Activated naive CD4-positive, alpha-beta T cell treated with anti-CD3 and anti-CD28 coated beads for 36 hours (primary cell): ENCODE measurements at regions of chr17 and their contacts with region 1.

Region 1: GRCh38 chr17:49707608-49708514 is at the start of gene SLC35B1:
- DNase-seq: peak; percentile 99
- H3K4me3 Mint-ChIP-seq: peak within 1 kb of the TSS; percentile 84
- H3K27ac Mint-ChIP-seq: peak within 1 kb of the TSS; percentile 98
- H3K4me1 Mint-ChIP-seq: peaks cover 36% of the 10 kb centered on the region
- H3K27me3 Mint-ChIP-seq: no peaks in the 10 kb centered on the region
- total RNA-seq, gene SLC35B1: 35.3 to 39.5 TPM

Region 2: GRCh38 chr17:48593840-48594537 is 1113.9 kb before region 1 on chr17:
- CTCF ChIA-PET with region 1: no interaction called
- intact Hi-C with region 1: no loop called
- DNase-seq: peak; percentile 87
- H3K4me3 Mint-ChIP-seq: peak overlapping the region; percentile 77
- H3K27ac Mint-ChIP-seq: no peak overlapping the region
- H3K4me1 Mint-ChIP-seq: peaks cover 36% of the 10 kb centered on the region
- H3K27me3 Mint-ChIP-seq: peaks cover 90% of the 10 kb centered on the region

Region 3: GRCh38 chr17:49556223-49556971 is 151.5 kb before region 1 on chr17:
- CTCF ChIA-PET with region 1: interaction called, 17 read pairs
- intact Hi-C with region 1: no loop called
- DNase-seq: peak; percentile 87
- H3K4me3 Mint-ChIP-seq: no peak overlapping the region
- H3K27ac Mint-ChIP-seq: no peak overlapping the region
- H3K4me1 Mint-ChIP-seq: peaks cover 5% of the 10 kb centered on the region
- H3K27me3 Mint-ChIP-seq: peaks cover 2% of the 10 kb centered on the region

Region 4: DNA sequence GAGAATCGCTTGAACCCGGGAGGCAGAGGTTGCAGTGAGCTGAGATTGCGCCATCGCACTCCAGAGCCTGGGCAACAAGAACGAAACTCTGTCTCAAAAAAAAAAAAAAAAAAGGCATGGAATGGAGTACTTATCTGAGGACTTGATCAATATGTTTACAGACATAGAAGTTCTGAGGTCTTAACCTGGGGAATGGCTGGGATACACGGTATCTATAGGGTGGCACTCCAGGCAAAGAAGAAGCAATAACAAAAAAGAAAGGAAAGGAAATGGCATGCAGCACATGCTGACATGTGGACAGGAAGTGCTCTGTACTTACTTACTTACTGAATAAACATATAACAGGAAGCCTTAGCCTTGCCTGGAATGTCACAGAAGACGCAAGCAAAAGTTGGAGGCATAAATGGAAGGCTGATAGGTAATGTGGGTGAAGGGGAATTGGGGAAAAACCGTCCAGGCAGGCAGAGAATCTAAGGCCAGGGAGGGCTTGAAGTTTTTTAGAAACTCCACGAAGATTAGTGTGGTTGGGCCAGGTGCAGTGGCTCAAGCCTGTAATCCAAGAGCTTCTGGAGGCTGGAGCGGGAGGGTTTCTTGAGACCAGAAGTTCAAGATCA is 19.9 kb before region 1 on chr17:
- CTCF ChIA-PET with region 1: interaction called, 23 read pairs
- intact Hi-C with region 1: no loop called
- DNase-seq: peak; percentile 53
- H3K4me3 Mint-ChIP-seq: peak overlapping the region; percentile 36
- H3K27ac Mint-ChIP-seq: peak overlapping the region; percentile 90
- H3K4me1 Mint-ChIP-seq: peaks cover 47% of the 10 kb centered on the region
- H3K27me3 Mint-ChIP-seq: no peaks in the 10 kb centered on the region

Region 5: GRCh38 chr17:49739641-49740271 is 31.9 kb after region 1 on chr17:
- CTCF ChIA-PET with region 1: interaction called, 8 read pairs
- intact Hi-C with region 1: loop called (anchors 2 kb)
- DNase-seq: peak; percentile 92
- H3K4me3 Mint-ChIP-seq: peak overlapping the region; percentile 84
- H3K27ac Mint-ChIP-seq: peak overlapping the region; percentile 99
- H3K4me1 Mint-ChIP-seq: peaks cover 73% of the 10 kb centered on the region
- H3K27me3 Mint-ChIP-seq: no peaks in the 10 kb centered on the region

Region 6: GRCh38 chr17:49763735-49764558 is 56.1 kb after region 1 on chr17 and contains the start of gene FAM117A:
- CTCF ChIA-PET with region 1: interaction called, 32 read pairs
- intact Hi-C with region 1: loop called (anchors 1 kb)
- DNase-seq: peak; percentile 99
- H3K4me3 Mint-ChIP-seq: peak within 1 kb of the TSS; percentile 88
- H3K27ac Mint-ChIP-seq: peak within 1 kb of the TSS; percentile 83
- H3K4me1 Mint-ChIP-seq: peaks cover 47% of the 10 kb centered on the region
- H3K27me3 Mint-ChIP-seq: no peaks in the 10 kb centered on the region
- total RNA-seq, gene FAM117A: 17.7 TPM

Region 7: DNA sequence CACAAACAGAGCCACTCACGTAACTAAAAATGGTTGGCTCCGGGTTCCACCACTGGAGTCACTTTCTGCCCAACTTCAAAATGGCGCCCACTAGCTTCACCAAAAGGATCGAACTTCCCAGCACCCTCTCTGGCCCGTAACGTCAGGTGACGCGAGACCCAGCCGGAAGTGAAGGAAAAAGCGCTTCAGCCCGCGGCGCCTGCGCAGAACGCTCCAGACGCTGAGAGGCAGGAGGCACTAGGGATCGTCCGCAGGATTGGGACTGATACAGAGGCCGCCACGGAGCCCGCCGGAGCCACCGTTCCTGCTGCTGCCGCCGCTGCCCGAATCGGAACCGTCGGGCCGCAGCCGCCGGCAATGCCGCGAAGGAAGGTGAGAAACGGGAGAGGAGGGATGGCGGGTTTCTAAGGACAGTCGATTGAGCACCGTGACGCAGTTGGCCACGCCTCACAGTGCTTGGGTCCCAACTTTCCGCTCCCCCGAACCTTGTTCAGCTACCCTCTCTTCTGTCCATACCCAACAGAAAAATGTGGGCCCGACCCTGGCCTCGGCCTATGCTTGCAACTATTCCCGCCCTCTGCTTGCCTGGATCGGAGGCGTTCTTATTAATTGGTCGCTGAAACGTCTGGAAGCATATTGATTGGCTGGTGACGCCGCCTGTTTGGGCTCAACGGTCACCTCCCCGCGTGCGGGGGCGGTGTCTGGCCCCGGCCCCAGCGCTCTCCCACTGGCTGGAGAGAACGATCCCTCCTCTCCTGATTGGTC is 80.8 kb after region 1 on chr17 and contains the start of gene KAT7:
- CTCF ChIA-PET with region 1: no interaction called
- intact Hi-C with region 1: loop called (anchors 1 kb)
- DNase-seq: peak; percentile 99
- H3K4me3 Mint-ChIP-seq: peak within 1 kb of the TSS; percentile 92
- H3K27ac Mint-ChIP-seq: peak within 1 kb of the TSS; percentile 95
- H3K4me1 Mint-ChIP-seq: peaks cover 51% of the 10 kb centered on the region
- H3K27me3 Mint-ChIP-seq: no peaks in the 10 kb centered on the region
- total RNA-seq, gene KAT7: 83.9 to 85.8 TPM